ENCODE measurements at regions of chr21 and their contacts with region 1.

Region 1: GRCh38 chr21:33531007-33531406 is 10.9 kb downstream of the GART start:
- DNase-seq: no peak
- H3K4me3 ChIP-seq: no peak overlapping the region
- H3K27ac ChIP-seq: no peak overlapping the region
- H3K4me1 ChIP-seq: no peaks in the 10 kb centered on the region
- CTCF ChIP-seq: no peak

Region 2: GRCh38 chr21:33219954-33220353 is 311.1 kb before region 1 on chr21:
- CTCF ChIA-PET with region 1: no interaction called
- POLR2A ChIA-PET with region 1: no interaction called
- intact Hi-C with region 1: no loop called
- DNase-seq: no peak
- H3K4me3 ChIP-seq: no peak overlapping the region
- H3K27ac ChIP-seq: no peak overlapping the region
- H3K4me1 ChIP-seq: peaks cover 44% of the 10 kb centered on the region
- CTCF ChIP-seq: no peak

Region 3: DNA sequence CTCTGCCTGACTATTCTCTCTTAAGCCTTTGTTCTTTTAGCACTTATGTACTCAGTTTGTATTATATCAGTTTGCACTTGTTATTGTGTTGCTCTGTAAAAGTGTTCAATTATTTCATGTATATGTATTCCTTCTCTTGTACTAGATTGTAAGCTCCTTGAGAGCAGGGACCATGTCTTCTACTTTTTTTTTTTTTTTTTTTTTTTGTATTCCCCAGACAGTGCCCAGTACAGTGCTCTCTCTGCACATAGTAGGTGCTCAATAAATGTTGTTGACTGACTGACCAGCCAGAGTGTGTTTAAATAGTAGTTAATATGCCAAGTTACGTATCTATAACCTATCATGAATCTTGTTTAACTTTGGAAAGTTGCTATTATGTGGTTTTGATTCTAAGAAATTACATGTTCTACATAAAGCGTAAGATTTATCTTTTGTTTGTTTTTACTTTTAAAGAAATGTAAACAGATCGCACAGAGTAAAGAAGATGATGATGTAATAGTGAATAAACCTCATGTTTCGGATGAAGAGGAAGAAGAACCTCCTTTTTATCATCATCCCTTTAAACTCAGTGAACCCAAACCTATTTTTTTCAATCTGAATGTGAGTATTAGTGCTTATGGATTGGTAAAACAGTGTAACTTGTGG is 27.9 kb after region 1 on chr21:
- CTCF ChIA-PET with region 1: interaction called, 3 read pairs
- POLR2A ChIA-PET with region 1: interaction called, 3 read pairs
- intact Hi-C with region 1: loop called (anchors 2 kb)
- DNase-seq: no peak
- H3K4me3 ChIP-seq: no peak overlapping the region
- H3K27ac ChIP-seq: no peak overlapping the region
- H3K4me1 ChIP-seq: no peaks in the 10 kb centered on the region
- CTCF ChIP-seq: no peak

Measured in OCI-LY7 (cell line).